ENCODE measurements at regions of chr4 and their contacts with region 1.

Region 1: DNA sequence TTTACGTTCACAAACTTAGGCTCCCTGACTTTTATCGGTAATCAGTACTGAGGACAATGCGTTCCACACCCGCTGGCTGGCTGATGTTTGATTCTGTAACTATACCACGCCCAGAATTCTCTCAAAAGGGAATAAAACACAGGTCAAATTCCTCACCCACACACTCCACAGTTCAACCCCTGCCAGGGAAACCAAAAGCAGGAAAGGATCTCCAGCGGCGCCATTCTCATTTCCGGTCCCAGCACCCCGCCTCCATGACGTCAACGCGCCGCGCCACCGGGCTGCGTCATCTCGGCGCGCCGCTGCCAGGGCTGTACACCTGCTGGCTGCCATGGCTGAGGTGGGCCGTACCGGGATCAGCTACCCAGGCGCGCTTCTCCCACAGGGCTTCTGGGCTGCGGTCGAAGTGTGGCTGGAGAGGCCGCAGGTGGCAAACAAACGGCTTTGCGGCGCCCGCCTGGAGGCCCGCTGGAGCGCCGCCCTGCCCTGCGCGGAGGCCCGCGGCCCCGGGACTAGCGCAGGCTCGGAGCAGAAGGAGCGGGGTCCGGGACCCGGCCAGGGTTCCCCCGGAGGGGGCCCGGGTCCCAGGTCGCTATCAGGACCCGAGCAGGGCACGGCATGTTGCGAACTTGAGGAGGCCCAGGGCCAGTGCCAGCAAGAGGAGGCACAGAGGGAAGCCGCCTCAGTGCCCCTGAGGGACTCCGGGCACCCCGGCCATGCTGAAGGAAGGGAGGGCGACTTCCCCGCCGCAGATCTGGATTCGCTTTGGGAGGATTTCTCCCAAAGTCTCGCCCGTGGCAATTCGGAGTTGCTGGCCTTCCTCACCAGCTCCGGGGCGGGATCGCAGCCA is at the starts of genes ACOX3 and TRMT44:
- DNase-seq: peak; percentile 79 to 98 (median 91)
- ATAC-seq: peak; percentile 90 to 93 (median 90)
- H3K4me3 ChIP-seq: peak within 1 kb of the TSS; percentile 62 to 99
- H3K4me3 Mint-ChIP-seq: peak within 1 kb of the TSS; percentile 93 to 98 (median 98)
- H3K27ac ChIP-seq: peak within 1 kb of the TSS; percentile 90
- H3K27ac Mint-ChIP-seq: peak within 1 kb of the TSS; percentile 98
- H3K4me1 ChIP-seq: peaks cover 28 to 46% of the 10 kb centered on the region in 2 experiments
- H3K4me1 Mint-ChIP-seq: peaks cover 84 to 93% (median 85%) of the 10 kb centered on the region in 3 donors
- H3K27me3 ChIP-seq: no peaks in the 10 kb centered on the region
- H3K27me3 Mint-ChIP-seq: peaks cover 0 to 2% of the 10 kb centered on the region in 2 donors
- total RNA-seq, gene ACOX3: 9.4 to 20.7 (median 15.8) TPM
- total RNA-seq, gene TRMT44: 25.6 to 40.9 (median 35.3) TPM

Region 2: DNA sequence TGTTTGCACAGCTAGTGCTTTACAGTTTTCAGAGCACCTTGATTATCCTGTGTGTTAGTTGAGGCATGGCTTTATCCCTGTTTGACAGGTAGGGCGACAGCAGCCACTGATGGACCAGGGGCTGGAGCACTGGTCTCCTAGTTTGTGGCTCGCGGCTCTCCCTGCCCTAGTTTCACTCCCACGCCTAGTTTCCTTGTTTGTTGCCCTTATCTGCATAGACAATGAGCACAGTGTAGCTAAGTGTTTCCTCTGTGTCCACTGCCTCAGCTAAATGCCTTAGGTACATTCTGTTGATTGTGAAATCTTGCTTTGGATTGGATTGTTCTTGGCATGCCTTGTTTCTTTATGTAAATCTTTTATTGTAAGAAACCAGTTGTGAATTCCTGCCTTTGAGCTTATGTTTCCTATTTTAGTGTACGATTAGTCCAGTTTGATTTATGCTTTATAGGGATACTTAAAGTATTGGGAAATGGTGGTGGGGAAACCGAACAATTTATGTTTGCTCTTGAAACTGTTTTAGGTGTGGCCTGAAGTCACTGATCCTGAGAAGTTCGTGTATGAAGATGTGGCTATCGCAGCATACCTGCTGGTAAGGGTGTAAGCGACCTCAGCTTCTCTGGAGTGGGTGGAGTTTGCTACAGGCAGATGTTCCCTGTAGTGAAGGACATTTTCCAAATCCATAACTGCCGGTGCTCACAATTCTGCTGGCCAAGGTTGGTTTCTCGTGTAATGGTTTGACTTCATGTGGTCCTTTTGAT is 10.9 kb after region 1 on chr4:
- CTCF ChIA-PET with region 1: no interaction called
- POLR2A ChIA-PET with region 1: interaction called in 1 of 2 experiments, 16 read pairs
- DNase-seq: no peak
- ATAC-seq: no peak
- H3K4me3 ChIP-seq: no peak overlapping the region
- H3K4me3 Mint-ChIP-seq: no peak overlapping the region
- H3K27ac ChIP-seq: no peak overlapping the region
- H3K27ac Mint-ChIP-seq: no peak overlapping the region
- H3K4me1 ChIP-seq: no peaks in the 10 kb centered on the region
- H3K4me1 Mint-ChIP-seq: no peaks in the 10 kb centered on the region
- H3K27me3 ChIP-seq: no peaks in the 10 kb centered on the region
- H3K27me3 Mint-ChIP-seq: no peaks in the 10 kb centered on the region

Measured in T-cell (primary cell).